Activated T-helper 1 cell treated with anti-CD3 and anti-CD28 coated beads, Interleukin-12 subunit alpha, Interleukin-12 subunit beta, Interleukin-2, Interleukin-4 antibody, amounts not matched to agents 30 ng/mL and 10 ng/mL and 1 ng/mL, durations not matched to agents 14 hours and 24 hours and 36 hours (primary cell): ENCODE measurements at regions of chr17 and their contacts with region 1.

Region 1: DNA sequence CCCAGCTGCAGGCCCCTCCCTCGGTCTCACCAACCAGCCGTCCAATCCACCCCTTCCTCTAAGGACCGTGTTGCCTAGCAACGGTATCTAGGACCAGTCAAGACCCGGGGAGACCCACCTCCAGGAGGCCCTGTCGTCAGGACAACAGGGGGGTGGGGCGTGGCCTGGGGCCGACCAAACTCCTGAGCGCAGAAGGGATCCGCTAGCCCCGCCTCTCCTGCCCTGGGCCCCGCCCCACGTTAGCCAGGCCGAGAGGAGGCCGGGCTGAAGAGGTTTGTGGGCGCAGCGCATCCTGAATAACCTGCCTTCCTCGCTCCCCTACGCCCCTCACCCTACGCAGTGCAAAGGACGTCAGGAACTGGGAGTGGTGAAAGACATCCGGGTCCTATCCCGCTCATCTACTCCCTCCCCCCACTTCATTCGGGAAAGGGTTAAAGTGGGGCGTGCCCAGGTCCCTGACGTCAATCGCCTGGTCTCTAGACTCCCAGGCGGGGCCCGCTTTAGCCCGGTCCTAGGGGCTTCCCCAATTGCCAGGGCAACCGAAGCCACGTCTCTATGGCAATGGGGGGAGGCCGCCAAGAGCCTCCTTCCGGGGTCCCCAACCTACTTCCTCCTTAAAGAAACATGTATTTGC is 14.7 kb downstream of the DLG4 start:
- DNase-seq: peak; percentile 92
- H3K4me3 Mint-ChIP-seq: peak overlapping the region; percentile 85
- H3K27ac Mint-ChIP-seq: peak overlapping the region; percentile 86
- H3K4me1 Mint-ChIP-seq: peaks cover 24% of the 10 kb centered on the region
- H3K27me3 Mint-ChIP-seq: peaks cover 2% of the 10 kb centered on the region

Region 2: DNA sequence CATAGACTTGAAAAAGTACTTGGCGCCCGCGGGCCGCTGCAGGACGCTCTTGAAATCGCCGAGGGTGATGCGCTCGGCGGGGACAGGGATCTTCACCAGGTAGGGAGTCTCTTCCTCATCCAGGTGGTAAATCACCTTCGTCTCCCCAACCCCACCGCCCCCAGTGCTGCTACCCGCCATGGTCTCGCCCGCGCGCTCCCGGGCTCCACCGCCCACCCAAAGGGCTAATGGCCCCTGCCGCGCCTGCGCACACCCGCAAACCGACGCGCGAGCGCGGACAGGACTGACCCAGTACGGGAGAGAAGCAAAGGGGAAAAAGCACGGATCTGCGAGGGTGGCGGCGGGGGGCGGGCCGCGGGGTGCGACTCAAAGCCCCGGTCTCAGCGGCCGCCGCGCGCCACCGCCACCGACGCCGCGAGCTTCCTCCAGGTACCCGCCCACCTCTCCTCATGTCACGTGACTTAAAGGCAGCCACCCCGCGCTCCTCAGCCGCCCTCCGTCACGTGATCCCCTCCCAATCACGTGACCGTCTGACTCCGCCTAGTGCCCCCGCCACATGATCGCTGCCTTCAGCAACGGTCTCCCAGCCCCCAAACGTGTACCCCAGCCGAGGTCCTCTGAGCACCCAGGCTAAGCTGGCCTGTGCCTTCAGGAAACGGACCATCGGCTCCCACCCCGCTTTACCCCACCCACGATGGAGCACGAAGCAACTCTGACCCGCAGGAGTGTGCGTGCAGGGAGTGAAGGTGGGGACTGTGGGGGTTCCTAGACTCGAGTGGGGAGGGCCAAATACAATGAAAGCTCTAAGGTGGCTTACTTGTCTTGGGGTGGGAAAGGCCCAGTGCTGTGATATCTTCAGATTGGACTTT is 29.4 kb after region 1 on chr17 and contains the start of gene DVL2:
- intact Hi-C with region 1: loop called (anchors 1 kb)
- DNase-seq: peak; percentile 93
- H3K4me3 Mint-ChIP-seq: peak within 1 kb of the TSS; percentile 91
- H3K27ac Mint-ChIP-seq: peak within 1 kb of the TSS; percentile 92
- H3K4me1 Mint-ChIP-seq: peaks cover 46% of the 10 kb centered on the region
- H3K27me3 Mint-ChIP-seq: no peaks in the 10 kb centered on the region
- total RNA-seq, gene DVL2: 70.0 and 73.5 TPM in 2 replicates

Region 3: GRCh38 chr17:7239091-7240027 is 34.4 kb after region 1 on chr17 and contains the start of gene PHF23:
- intact Hi-C with region 1: loop called (anchors 1 kb)
- DNase-seq: peak; percentile 98
- H3K4me3 Mint-ChIP-seq: peak within 1 kb of the TSS; percentile 97
- H3K27ac Mint-ChIP-seq: peak within 1 kb of the TSS; percentile 94
- H3K4me1 Mint-ChIP-seq: peaks cover 68% of the 10 kb centered on the region
- H3K27me3 Mint-ChIP-seq: no peaks in the 10 kb centered on the region
- total RNA-seq, gene PHF23: 52.5 and 55.4 TPM in 2 replicates

Region 4: DNA sequence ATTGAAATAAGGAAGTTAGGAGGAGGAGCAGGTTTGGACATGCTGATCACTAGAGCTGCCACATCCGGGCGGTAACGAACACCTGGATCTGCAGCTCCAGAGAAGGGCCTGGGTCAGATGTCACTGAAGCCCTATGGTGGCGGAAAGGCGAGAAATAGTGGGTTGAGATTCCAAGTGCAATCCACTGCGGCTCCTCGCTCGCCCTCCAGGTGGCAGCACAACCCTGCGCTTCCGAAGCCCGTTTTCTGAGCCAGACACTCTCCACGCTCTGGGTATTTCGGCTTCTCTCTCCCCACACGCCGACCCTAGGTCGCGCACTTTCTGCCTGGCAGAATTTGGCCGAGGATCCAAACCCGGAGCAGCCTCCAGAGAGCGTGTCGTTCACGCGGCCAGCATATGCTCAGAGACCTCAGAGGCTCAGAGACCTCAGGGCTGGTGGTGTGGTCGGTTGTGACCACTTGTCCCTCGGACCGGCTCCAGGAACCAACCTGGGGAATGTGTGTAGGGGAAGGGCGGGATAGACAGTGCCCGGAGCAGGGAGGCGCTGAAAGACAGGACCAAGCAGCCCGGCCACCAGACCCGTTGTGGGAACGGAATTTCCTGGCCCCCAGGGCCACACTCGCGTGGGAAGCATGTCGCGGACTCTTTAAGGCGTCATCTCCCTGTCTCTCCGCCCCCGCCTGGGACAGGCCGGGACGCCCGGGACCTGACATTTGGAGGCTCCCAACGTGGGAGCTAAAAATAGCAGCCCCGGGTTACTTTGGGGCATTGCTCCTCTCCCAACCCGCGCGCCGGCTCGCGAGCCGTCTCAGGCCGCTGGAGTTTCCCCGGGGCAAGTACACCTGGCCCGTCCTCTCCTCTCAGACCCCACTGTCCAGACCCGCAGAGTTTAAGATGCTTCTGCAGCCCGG is 75.8 kb after region 1 on chr17:
- intact Hi-C with region 1: no loop called
- DNase-seq: peak; percentile 69
- H3K4me3 Mint-ChIP-seq: peak overlapping the region; percentile 79
- H3K27ac Mint-ChIP-seq: peak overlapping the region; percentile 40
- H3K4me1 Mint-ChIP-seq: peaks cover 16% of the 10 kb centered on the region
- H3K27me3 Mint-ChIP-seq: peaks cover 33% of the 10 kb centered on the region